ENCODE measurements at regions of chr9 and their contacts with region 1.

Region 1: DNA sequence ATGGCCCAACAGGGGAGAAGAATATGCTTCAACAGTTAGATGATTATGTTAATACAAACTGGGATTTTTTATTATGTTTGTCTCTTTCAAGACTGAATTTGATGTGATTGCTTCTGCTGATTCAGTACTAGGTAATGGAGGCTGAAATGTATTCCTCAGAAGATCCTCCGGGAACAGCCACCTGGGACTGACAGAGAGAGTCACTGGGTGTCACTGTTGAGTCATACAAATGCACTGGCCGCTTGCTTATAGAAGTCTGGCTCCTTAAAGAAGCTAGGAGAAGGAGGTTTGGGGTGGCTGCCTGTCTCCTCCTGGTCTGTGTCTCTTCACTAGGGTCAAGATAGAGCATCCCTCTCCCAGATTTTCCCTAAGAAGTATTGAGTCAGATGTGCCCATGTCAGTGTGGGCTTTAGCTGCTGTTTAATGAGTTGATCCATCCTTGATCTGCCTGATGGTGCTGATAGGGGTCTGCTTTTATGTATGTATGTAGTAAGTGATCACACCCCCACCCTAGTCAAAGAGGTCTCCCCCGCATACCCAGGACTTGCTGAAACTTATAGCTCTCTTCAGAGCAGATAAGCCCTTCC is 773.4 kb downstream of the BRINP1 start:
- DNase-seq: peak; percentile 66
- H3K4me3 ChIP-seq: no peak overlapping the region
- H3K27ac ChIP-seq: no peak overlapping the region
- H3K4me1 ChIP-seq: no peaks in the 10 kb centered on the region
- H3K27me3 ChIP-seq: no peaks in the 10 kb centered on the region
- CTCF ChIP-seq: peak; percentile 17 to 40 (median 30)
- EP300 ChIP-seq: no peak
- POLR2A ChIP-seq: no peak

Region 2: DNA sequence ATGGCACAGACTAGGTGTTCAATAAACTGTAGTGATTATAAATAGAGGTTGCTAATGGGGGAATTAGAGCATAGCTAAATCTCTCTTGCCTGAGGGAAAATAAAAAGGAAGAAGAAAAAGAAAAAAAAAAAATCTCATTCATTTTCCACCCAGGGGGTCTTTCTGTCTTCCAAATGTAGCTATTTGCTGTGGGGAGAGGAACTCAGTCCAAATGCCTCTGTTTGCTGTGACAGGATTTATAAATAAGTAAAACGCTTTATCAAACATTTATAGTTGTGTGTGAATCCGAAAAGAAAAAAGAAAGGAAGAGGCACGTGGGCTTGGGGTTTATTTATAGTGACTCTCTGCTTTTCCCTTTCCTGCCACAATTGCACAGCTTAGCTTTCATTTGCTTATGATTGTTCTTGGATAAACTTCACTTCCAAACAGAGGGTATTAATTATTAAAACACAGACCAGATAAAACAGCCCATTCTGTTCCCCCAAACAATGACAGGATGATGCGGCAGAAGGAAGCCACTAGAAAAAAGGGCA is 1426.7 kb before region 1 on chr9:
- intact Hi-C with region 1: no loop called
- DNase-seq: no peak
- H3K4me3 ChIP-seq: no peak overlapping the region
- H3K27ac ChIP-seq: no peak overlapping the region
- H3K4me1 ChIP-seq: no peaks in the 10 kb centered on the region
- H3K27me3 ChIP-seq: no peaks in the 10 kb centered on the region
- CTCF ChIP-seq: no peak
- EP300 ChIP-seq: no peak
- POLR2A ChIP-seq: no peak

Region 3: GRCh38 chr9:118659011-118659410 is 63.2 kb after region 1 on chr9:
- intact Hi-C with region 1: loop called (anchors 5 kb)
- DNase-seq: no peak
- H3K4me3 ChIP-seq: no peak overlapping the region
- H3K27ac ChIP-seq: no peak overlapping the region
- H3K4me1 ChIP-seq: peaks cover 0 to 6% (median 0%) of the 10 kb centered on the region in 4 donors
- H3K27me3 ChIP-seq: no peaks in the 10 kb centered on the region
- CTCF ChIP-seq: no peak
- EP300 ChIP-seq: no peak
- POLR2A ChIP-seq: no peak

Region 4: GRCh38 chr9:118836891-118837290 is 241.1 kb after region 1 on chr9:
- intact Hi-C with region 1: loop called (anchors 10 kb)
- DNase-seq: no peak
- H3K4me3 ChIP-seq: no peak overlapping the region
- H3K27ac ChIP-seq: no peak overlapping the region
- H3K4me1 ChIP-seq: no peaks in the 10 kb centered on the region
- H3K27me3 ChIP-seq: no peaks in the 10 kb centered on the region
- CTCF ChIP-seq: no peak
- EP300 ChIP-seq: no peak
- POLR2A ChIP-seq: no peak

Region 5: DNA sequence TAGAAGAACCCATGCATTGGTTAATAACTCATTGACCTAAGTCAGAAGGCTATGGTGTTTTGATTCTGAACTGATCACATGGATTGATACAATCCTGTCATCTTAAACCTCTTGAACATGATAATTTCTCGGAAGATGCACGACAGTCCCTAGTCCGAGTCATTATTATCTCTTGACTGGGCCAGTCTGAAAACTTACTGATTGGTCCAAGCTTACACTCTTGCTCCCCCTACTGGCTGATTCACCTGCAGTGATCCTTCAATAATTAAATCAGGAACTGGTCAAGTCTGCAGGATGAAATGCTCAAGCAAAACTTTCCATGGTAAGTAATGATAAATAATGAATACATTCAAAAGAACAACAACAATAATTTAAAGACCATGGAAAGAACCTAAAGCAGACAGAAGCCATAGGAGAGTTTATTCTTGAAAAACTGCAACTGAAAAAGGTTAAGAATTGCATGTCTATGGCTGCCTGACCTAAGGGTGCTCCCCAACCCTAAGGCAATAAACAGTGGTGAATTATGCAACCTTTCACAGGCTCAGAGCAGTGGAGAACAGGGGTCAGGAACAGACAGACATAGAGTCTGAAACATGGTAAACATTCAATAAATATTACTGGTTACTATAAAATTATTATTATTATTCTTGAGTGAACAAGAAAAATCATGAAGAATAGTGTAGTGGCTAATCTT is 694.1 kb after region 1 on chr9:
- intact Hi-C with region 1: loop called (anchors 2 kb)
- DNase-seq: no peak
- H3K4me3 ChIP-seq: no peak overlapping the region
- H3K27ac ChIP-seq: no peak overlapping the region
- H3K4me1 ChIP-seq: peaks cover 0 to 4% (median under 1%) of the 10 kb centered on the region in 4 donors
- H3K27me3 ChIP-seq: no peaks in the 10 kb centered on the region
- CTCF ChIP-seq: peak; percentile 55 to 84 (median 76)
- EP300 ChIP-seq: no peak
- POLR2A ChIP-seq: no peak